Adrenal gland (tissue), 19 donors: ENCODE measurements at regions of chr1 and their contacts with region 1.

Region 1: GRCh38 chr1:108897865-108898720 is 21.3 kb downstream of the GPSM2 start:
- DNase-seq: peak in 5 of 7 donors; percentile 27 to 49 (median 43)
- H3K4me3 ChIP-seq: no peak overlapping the region
- H3K27ac ChIP-seq: no peak overlapping the region
- H3K4me1 ChIP-seq: no peaks in the 10 kb centered on the region
- H3K27me3 ChIP-seq: no peaks in the 10 kb centered on the region
- CTCF ChIP-seq: peak; percentile 67 to 84 (median 81)
- POLR2A ChIP-seq: no peak

Region 2: DNA sequence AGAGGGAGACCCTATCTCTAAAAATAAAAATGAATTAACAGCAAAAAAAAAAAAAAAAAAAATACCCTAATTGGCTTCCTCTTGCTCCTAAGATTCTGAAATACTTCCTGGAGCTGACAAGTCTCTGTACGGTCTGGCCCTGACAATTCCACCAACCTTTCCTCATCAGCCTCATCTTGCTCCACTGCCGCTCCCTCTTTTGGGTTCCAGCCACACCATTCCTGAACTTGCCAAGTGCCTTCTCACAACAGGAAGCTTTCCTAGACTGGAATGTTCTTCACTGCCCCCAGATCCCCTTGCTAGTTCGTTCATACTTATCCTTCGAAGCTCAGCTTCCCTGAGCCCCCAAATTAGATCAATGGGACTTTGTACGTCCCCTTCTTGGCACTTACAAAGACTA is 78.2 kb before region 1 on chr1:
- intact Hi-C with region 1: loop called (anchors 5 kb)
- DNase-seq: no peak
- H3K4me3 ChIP-seq: no peak overlapping the region
- H3K27ac ChIP-seq: no peak overlapping the region
- H3K4me1 ChIP-seq: peaks cover 4 to 12% of the 10 kb centered on the region in 2 donors
- H3K27me3 ChIP-seq: no peaks in the 10 kb centered on the region
- CTCF ChIP-seq: no peak
- POLR2A ChIP-seq: no peak

Region 3: DNA sequence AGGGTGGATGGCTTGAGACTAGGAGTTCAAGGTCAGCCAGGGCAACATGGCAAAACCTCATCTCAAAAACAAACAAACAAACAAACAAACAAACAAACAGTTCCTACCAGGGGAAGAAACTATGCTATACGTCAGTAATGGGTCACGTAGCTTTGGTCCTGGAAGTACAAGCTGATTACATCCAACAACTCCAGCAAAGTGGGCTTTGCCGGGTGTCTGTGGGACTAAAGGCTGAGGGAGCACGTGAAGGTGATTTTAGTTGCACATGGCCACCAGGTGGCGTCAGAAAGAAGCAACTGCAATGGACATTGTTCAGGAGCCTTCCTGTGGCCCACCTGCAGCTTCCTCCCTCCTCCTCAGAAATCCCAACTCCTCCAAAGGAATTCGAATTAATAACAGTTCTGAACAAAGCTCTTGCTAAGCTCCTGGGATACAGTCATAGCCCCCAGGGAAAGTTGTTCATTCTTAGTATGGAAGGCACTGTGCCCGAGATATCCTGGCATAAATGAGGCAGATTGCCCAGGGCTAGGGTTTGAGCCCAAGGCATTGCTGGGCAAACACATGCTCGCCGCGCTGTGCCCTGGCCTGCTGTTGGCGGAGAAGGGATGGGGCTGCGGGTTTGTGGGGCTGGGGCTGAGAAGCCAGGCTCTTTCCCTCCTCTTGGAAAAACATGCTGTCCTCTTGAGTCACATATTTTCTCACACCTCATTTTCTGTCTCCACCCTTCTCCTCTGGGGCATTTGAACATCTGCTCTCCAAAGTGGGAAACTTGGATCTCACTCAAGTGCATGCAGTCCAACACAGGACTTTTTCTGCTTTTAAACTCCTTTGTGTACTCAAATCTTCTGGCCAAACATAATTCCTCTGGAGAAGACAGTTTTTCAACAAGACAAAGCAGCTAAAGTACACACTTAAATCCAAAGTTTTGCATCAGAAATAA is 69.8 kb before region 1 on chr1:
- intact Hi-C with region 1: loop called (anchors 5 kb)
- DNase-seq: peak; percentile 67 to 92 (median 80)
- H3K4me3 ChIP-seq: no peak overlapping the region
- H3K27ac ChIP-seq: peak overlapping the region in 2 of 5 donors; percentile 51 to 86
- H3K4me1 ChIP-seq: peaks cover 3 to 20% of the 10 kb centered on the region in 2 donors
- H3K27me3 ChIP-seq: no peaks in the 10 kb centered on the region
- CTCF ChIP-seq: peak; percentile 62 to 87 (median 79)
- POLR2A ChIP-seq: no peak